ENCODE measurements at regions of chr1 and their contacts with region 1.

Region 1: DNA sequence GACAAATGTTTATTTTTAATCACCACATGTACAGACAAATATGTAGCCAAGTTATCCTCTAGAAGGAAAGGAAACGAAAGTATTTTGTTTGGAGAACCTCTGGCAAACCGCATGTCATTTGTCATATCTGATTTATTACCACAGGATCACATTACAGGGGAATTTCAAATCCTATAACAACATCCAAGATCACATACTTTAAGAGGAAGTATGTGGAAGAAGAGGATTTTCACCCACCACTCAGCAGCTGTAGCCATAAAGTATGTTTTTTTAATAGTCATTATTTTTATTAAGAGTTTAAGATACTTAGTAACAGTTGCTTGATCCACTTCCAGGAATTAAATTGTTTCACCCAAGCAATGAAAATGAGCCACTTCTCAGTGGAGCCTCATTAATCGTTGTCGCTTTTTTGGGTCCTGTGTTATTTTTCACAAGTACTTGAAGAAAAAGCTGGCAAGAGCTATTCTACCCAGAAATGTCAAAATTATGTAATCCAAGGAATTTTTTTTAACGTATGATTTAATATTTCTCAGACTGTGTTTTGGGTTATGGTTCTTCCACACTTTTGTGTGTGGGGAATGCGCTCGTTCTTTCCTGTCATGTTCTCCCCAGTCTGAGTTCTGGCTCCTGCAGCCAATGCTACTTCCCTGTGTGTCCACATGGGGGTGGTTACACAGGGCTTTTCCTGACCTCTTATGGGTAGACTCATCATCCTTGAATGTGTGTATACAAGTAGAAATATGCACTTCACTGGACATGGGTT is 6.9 kb downstream of the SERTAD4 start:
- DNase-seq: peak in 1 of 2 experiments; percentile 74
- H3K4me3 ChIP-seq: no peak overlapping the region
- H3K27ac ChIP-seq: no peak overlapping the region
- H3K4me1 ChIP-seq: peaks cover 29% of the 10 kb centered on the region
- H3K27me3 ChIP-seq: no peaks in the 10 kb centered on the region
- CTCF ChIP-seq: peak; percentile 44; the same call in 1 of the 2 replicates

Region 2: GRCh38 chr1:209956116-209956515 is 283.4 kb before region 1 on chr1:
- CTCF ChIA-PET with region 1: no interaction called
- POLR2A ChIA-PET with region 1: no interaction called
- intact Hi-C with region 1: no loop called
- DNase-seq: no peak
- H3K4me3 ChIP-seq: no peak overlapping the region
- H3K27ac ChIP-seq: no peak overlapping the region
- H3K4me1 ChIP-seq: no peaks in the 10 kb centered on the region
- H3K27me3 ChIP-seq: no peaks in the 10 kb centered on the region
- CTCF ChIP-seq: no peak

Region 3: DNA sequence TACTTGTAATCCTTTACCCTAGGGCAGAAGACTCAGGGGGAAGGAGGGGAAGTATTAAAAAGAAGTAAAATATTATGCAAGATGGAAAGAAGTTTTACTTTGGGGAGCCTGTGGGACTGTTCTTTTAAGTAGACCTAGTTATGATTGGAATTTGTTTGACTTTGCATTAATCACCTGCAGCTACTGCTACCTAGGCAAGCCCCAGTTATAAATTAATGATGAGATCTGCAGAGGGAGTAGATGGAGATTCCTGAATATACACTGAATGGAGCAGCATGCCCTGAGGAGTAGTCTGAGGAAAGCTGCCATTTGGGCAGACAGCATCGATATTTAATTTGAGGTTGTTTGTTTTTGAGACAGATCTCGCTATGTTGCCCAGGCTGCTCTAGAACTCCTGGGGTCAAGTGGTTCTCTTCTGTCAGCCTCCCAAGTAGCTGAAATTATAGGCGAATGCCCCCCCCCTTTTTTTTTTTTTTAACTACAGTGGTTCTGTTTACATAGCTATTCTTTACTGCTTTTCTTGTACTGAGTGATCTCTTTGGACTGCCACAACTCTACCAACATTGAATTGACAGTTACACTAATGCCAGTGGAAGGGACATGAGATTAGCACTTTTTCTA is 88.4 kb before region 1 on chr1:
- CTCF ChIA-PET with region 1: no interaction called
- POLR2A ChIA-PET with region 1: no interaction called
- intact Hi-C with region 1: no loop called
- DNase-seq: no peak
- H3K4me3 ChIP-seq: no peak overlapping the region
- H3K27ac ChIP-seq: no peak overlapping the region
- H3K4me1 ChIP-seq: no peaks in the 10 kb centered on the region
- H3K27me3 ChIP-seq: no peaks in the 10 kb centered on the region
- CTCF ChIP-seq: no peak

Region 4: GRCh38 chr1:210299501-210299900 is 60.0 kb after region 1 on chr1:
- CTCF ChIA-PET with region 1: no interaction called
- POLR2A ChIA-PET with region 1: interaction called, 13 read pairs
- intact Hi-C with region 1: no loop called
- DNase-seq: peak in 1 of 2 experiments; percentile 51
- H3K4me3 ChIP-seq: no peak overlapping the region
- H3K27ac ChIP-seq: no peak overlapping the region
- H3K4me1 ChIP-seq: 0 out of 2 replicates have a peak, but pooled peaks cover 4% of the 10 kb centered on the region
- H3K27me3 ChIP-seq: no peaks in the 10 kb centered on the region
- CTCF ChIP-seq: no peak